IMR-90 (cell line): ENCODE measurements at regions of chr12 and their contacts with region 1.

Region 1: GRCh38 chr12:32302218-32303173 is 96.9 kb upstream of the FGD4 start:
- DNase-seq: no peak
- ATAC-seq: peak; percentile 51; the same call in 1 of the 2 replicates
- H3K4me3 ChIP-seq: no peak overlapping the region
- H3K27ac ChIP-seq: no peak overlapping the region
- H3K4me1 ChIP-seq: no peaks in the 10 kb centered on the region
- H3K27me3 ChIP-seq: no peaks in the 10 kb centered on the region
- CTCF ChIP-seq: peak; percentile 35
- POLR2A ChIP-seq: no peak
- RAD21 ChIP-seq: peak; percentile 39

Region 2: DNA sequence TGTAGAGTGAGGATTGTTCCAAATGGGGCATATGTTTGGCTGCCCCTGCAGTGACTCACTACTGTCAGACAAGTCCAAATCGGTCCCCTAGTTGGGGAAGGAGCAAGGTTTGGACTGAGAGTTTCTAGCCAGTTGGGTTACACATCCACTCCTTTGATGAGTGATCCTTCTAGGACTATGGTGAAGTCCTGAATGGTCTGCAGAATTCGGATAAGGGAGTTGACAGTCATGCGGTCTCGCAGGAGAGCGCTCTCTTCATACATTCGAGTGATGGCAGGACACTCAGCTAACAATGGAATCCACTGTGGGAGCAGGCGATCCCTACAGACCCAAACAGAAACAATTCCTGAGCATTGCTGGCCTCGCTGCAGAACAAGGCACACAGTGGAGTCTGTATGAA is 915.0 kb before region 1 on chr12:
- CTCF ChIA-PET with region 1: no interaction called
- POLR2A ChIA-PET with region 1: no interaction called
- dilution Hi-C with region 1: no loop called
- in situ Hi-C with region 1: loop called (anchors 25 kb)
- intact Hi-C with region 1: no loop called
- DNase-seq: no peak
- ATAC-seq: no peak
- H3K4me3 ChIP-seq: no peak overlapping the region
- H3K27ac ChIP-seq: no peak overlapping the region
- H3K4me1 ChIP-seq: peaks cover 2% of the 10 kb centered on the region; the same call in 1 of the 2 replicates
- H3K27me3 ChIP-seq: no peaks in the 10 kb centered on the region
- CTCF ChIP-seq: no peak
- POLR2A ChIP-seq: no peak
- RAD21 ChIP-seq: no peak

Region 3: GRCh38 chr12:31959161-31959700 is 343.3 kb before region 1 on chr12 and contains the start of gene RESF1:
- CTCF ChIA-PET with region 1: no interaction called
- POLR2A ChIA-PET with region 1: no interaction called
- dilution Hi-C with region 1: no loop called
- in situ Hi-C with region 1: no loop called
- intact Hi-C with region 1: loop called (anchors 5 kb)
- DNase-seq: peak; percentile 76
- ATAC-seq: peak; percentile 98
- H3K4me3 ChIP-seq: peak within 1 kb of the TSS; percentile 61
- H3K27ac ChIP-seq: peak within 1 kb of the TSS; percentile 61
- H3K4me1 ChIP-seq: peaks cover 3% of the 10 kb centered on the region
- H3K27me3 ChIP-seq: no peaks in the 10 kb centered on the region
- CTCF ChIP-seq: 0 out of 2 replicates have a peak, but pooled peaks have one; percentile 4
- POLR2A ChIP-seq: 0 out of 2 replicates have a peak, but pooled peaks have one; percentile 48
- RAD21 ChIP-seq: peak; percentile 1; the same call in 1 of the 2 replicates
- total RNA-seq, gene RESF1: 7.3 and 10.3 TPM in 2 replicates

Region 4: GRCh38 chr12:32069071-32069470 is 233.4 kb before region 1 on chr12:
- CTCF ChIA-PET with region 1: no interaction called
- POLR2A ChIA-PET with region 1: no interaction called
- dilution Hi-C with region 1: no loop called
- in situ Hi-C with region 1: loop called (anchors 5 kb)
- intact Hi-C with region 1: no loop called
- DNase-seq: no peak
- ATAC-seq: no peak
- H3K4me3 ChIP-seq: no peak overlapping the region
- H3K27ac ChIP-seq: no peak overlapping the region
- H3K4me1 ChIP-seq: no peaks in the 10 kb centered on the region
- H3K27me3 ChIP-seq: no peaks in the 10 kb centered on the region
- CTCF ChIP-seq: no peak
- POLR2A ChIP-seq: no peak
- RAD21 ChIP-seq: no peak

Region 5: DNA sequence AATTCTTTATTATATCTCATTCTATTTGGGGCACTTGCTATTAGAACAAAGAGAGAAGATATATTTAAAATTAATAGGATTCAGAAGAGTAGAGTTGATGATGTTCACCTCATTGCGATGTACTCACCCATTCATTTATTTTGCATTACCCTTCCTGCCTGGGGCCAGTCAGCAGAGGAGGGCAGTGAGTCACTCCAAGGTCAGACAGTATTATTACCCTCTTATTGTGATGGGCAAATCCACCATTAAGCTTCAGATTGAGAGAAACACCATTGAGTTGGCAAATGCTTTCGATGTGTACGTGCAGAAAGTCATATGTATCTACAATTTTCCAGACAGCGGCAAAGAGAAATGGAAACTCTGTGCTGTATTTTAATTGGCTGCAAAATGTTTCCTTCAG is 61.7 kb before region 1 on chr12:
- CTCF ChIA-PET with region 1: no interaction called
- POLR2A ChIA-PET with region 1: no interaction called
- dilution Hi-C with region 1: no loop called
- in situ Hi-C with region 1: loop called (anchors 10 kb)
- intact Hi-C with region 1: no loop called
- DNase-seq: peak; percentile 41
- ATAC-seq: peak; percentile 68
- H3K4me3 ChIP-seq: no peak overlapping the region
- H3K27ac ChIP-seq: no peak overlapping the region
- H3K4me1 ChIP-seq: no peaks in the 10 kb centered on the region
- H3K27me3 ChIP-seq: no peaks in the 10 kb centered on the region
- CTCF ChIP-seq: no peak
- POLR2A ChIP-seq: no peak
- RAD21 ChIP-seq: no peak